ENCODE measurements at regions of chr12 and their contacts with region 1.

Region 1: GRCh38 chr12:121550974-121551634 is 29.7 kb downstream of the KDM2B start:
- DNase-seq: no peak
- ATAC-seq: no peak
- H3K4me3 Mint-ChIP-seq: no peak overlapping the region
- H3K27ac Mint-ChIP-seq: no peak overlapping the region
- H3K4me1 Mint-ChIP-seq: peaks cover 6% of the 10 kb centered on the region
- H3K27me3 Mint-ChIP-seq: no peaks in the 10 kb centered on the region

Region 2: GRCh38 chr12:121637231-121637914 is 86.3 kb after region 1 on chr12:
- CTCF ChIA-PET with region 1: interaction called, 14 read pairs
- POLR2A ChIA-PET with region 1: interaction called, 5 read pairs
- intact Hi-C with region 1: no loop called
- DNase-seq: peak; percentile 77
- ATAC-seq: peak; percentile 86
- H3K4me3 Mint-ChIP-seq: peak overlapping the region; percentile 63
- H3K27ac Mint-ChIP-seq: peak overlapping the region; percentile 91
- H3K4me1 Mint-ChIP-seq: peaks cover 53% of the 10 kb centered on the region
- H3K27me3 Mint-ChIP-seq: no peaks in the 10 kb centered on the region

Region 3: GRCh38 chr12:121678716-121679580 is 127.8 kb after region 1 on chr12:
- CTCF ChIA-PET with region 1: interaction called, 49 read pairs
- POLR2A ChIA-PET with region 1: no interaction called
- intact Hi-C with region 1: loop called (anchors 1 kb)
- DNase-seq: peak; percentile 32
- ATAC-seq: peak; percentile 21
- H3K4me3 Mint-ChIP-seq: no peak overlapping the region
- H3K27ac Mint-ChIP-seq: peak overlapping the region; percentile 23
- H3K4me1 Mint-ChIP-seq: peaks cover 7% of the 10 kb centered on the region
- H3K27me3 Mint-ChIP-seq: no peaks in the 10 kb centered on the region

Region 4: GRCh38 chr12:121773011-121773777 is 222.1 kb after region 1 on chr12:
- CTCF ChIA-PET with region 1: interaction called, 3 read pairs
- POLR2A ChIA-PET with region 1: no interaction called
- intact Hi-C with region 1: loop called in 1 of 2 experiments (anchors 5 kb)
- DNase-seq: peak; percentile 90
- ATAC-seq: peak; percentile 83
- H3K4me3 Mint-ChIP-seq: no peak overlapping the region
- H3K27ac Mint-ChIP-seq: peak overlapping the region; percentile 81
- H3K4me1 Mint-ChIP-seq: peaks cover 11% of the 10 kb centered on the region
- H3K27me3 Mint-ChIP-seq: no peaks in the 10 kb centered on the region

Region 5: GRCh38 chr12:121849665-121850064 is 298.6 kb after region 1 on chr12:
- CTCF ChIA-PET with region 1: no interaction called
- POLR2A ChIA-PET with region 1: no interaction called
- intact Hi-C with region 1: no loop called
- DNase-seq: no peak
- ATAC-seq: no peak
- H3K4me3 Mint-ChIP-seq: no peak overlapping the region
- H3K27ac Mint-ChIP-seq: no peak overlapping the region
- H3K4me1 Mint-ChIP-seq: no peaks in the 10 kb centered on the region
- H3K27me3 Mint-ChIP-seq: no peaks in the 10 kb centered on the region

Region 6: DNA sequence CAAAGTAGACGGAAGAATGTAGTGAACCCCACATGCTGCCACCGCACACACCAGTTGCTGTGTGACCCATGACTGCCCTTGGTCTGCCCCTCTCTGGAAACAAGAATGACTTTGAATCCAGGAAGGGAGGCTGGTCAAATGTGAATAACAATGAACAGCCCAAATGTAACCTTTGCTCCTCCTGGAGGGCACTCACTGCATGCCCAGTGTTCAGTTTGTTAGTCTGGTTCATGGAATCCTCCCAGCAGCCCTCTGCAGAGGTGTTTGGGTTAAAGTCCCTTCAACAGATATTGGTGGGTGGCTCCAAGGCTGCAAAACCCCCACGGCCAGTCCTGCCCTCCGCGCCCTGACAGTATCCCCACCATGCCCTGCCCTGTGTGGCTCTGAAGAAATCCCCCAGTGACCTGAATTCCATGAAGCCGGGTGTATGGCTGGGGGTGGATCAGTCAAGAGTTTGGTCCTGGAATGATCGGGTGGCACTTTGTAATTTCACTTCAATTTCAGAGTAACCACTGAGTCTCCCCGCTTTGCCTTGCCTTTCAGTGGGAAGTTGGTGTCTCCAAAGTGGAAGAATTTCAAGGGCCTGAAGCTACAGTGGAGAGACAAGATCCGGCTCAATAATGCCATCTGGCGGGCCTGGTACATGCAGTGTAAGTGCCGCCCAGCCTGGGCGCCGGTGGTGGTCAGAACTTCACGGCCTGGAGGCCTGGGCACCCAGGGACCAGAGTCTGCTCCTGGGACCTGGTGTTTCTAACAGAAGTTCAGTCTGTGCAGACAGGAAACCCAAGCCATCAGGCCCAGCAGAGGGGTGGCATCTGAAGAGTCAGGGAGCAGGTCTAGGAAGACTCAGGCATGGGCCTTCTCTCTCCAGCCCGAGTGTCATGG is 575.9 kb after region 1 on chr12:
- CTCF ChIA-PET with region 1: no interaction called
- POLR2A ChIA-PET with region 1: no interaction called
- intact Hi-C with region 1: no loop called
- DNase-seq: no peak
- ATAC-seq: no peak
- H3K4me3 Mint-ChIP-seq: no peak overlapping the region
- H3K27ac Mint-ChIP-seq: no peak overlapping the region
- H3K4me1 Mint-ChIP-seq: peaks cover 22% of the 10 kb centered on the region
- H3K27me3 Mint-ChIP-seq: no peaks in the 10 kb centered on the region

Measured in activated CD4-positive, alpha-beta T cell treated with anti-CD3 and anti-CD28 coated beads for 36 hours (primary cell).